HepG2 (cell line): ENCODE measurements at regions of chr6 and their contacts with region 1.

Region 1: DNA sequence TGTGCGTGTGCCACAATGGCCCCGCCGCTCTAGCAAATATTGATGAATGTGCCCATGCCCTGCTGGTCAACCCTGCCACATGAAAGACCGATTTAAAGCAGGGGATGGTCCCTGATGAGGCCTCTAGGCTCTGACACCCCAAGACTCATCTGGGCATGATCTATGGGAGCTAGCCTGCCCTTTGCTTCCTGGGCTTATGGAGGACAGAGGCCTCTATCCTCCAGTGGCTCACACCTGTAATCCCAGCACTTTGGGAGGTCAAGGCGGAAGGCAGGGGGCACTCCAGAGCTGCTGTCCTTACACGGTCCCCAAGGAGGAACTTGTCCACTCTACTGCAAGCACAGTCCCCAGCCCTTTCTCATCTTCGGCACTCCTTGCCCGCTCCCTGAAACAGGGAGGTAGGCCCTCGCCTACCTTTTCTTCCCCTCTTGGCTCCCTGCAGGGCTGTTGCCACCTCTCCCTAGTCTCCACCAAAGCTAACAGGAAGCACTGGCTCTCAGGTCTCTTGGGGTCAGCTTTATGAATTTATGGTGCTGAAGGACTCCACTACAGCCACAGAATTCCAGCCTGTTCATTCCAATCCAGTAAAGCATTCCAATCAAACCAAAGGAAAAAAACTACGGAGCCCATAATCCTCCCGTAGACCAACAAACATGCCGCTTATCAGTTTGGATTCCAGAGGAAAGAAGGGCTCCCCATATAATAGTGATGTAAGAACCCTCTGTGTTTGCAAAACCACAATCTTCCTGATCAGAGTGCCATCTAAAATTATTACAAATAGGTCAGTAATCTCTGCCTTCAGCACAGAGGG is 48.7 kb upstream of the FOXQ1 start:
- DNase-seq: peak; percentile 99
- ATAC-seq: peak; percentile 57
- H3K4me3 ChIP-seq: peak overlapping the region; percentile 14 to 53 (median 14); a peak in 5 of 6 replicates
- H3K27ac ChIP-seq: peak overlapping the region; percentile 95
- H3K4me1 ChIP-seq: peaks cover 67% of the 10 kb centered on the region
- H3K27me3 ChIP-seq: no peaks in the 10 kb centered on the region
- CTCF ChIP-seq: peak; percentile 86
- EP300 ChIP-seq: peak in 1 of 2 experiments; percentile 91; a peak in 3 of 4 replicates
- POLR2A ChIP-seq: peak in 1 of 2 experiments; percentile 43; a peak in 2 of 4 replicates
- RAD21 ChIP-seq: peak; percentile 87

Region 2: DNA sequence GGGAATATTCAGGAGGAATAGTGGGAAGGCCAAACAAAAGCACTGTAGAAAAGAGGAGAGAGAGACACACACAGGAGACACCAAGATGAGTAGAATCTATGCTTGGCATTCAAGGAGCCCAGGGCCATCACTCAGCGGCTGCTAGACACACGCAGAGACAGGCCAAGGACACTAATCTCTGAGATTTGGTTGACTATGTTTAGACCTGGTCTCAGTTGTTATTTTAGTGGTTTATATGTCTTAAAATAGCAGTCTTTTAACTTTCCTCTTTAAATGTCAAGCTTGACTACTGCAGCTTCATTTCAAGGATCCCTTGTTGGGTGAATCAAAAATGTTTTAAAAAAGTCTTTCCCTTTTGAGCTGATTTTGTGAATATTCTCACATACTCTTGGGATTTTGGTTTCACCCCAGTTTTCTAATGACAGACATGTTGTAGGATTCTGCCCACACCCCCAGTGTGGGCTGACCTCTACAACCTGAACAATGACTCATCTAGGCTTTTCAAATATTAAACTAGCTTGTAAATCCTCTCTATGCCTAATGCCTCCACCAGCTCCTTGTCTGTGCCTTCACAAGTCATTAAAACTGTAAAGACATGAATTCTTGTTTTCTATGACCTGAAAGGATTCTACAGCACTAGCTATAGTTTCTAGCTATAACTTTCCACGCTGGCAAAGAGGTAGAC is 427.6 kb before region 1 on chr6:
- CTCF ChIA-PET with region 1: no interaction called
- POLR2A ChIA-PET with region 1: interaction called, 14 read pairs
- in situ Hi-C with region 1: no loop called
- intact Hi-C with region 1: no loop called
- DNase-seq: no peak
- ATAC-seq: peak; percentile 48; the same call in 1 of the 3 replicates
- H3K4me3 ChIP-seq: no peak overlapping the region
- H3K27ac ChIP-seq: no peak overlapping the region
- H3K4me1 ChIP-seq: peaks cover 33% of the 10 kb centered on the region
- H3K27me3 ChIP-seq: peaks cover 1 to 4% of the 10 kb centered on the region in 2 experiments; a peak in 1 of 5 replicates
- CTCF ChIP-seq: no peak
- EP300 ChIP-seq: no peak
- POLR2A ChIP-seq: no peak
- RAD21 ChIP-seq: no peak

Region 3: GRCh38 chr6:1055015-1055921 is 208.0 kb before region 1 on chr6:
- CTCF ChIA-PET with region 1: no interaction called
- POLR2A ChIA-PET with region 1: interaction called, 102 read pairs
- in situ Hi-C with region 1: loop called (anchors 5 kb)
- intact Hi-C with region 1: loop called (anchors 1 kb)
- DNase-seq: peak; percentile 100
- ATAC-seq: peak; percentile 80
- H3K4me3 ChIP-seq: peak overlapping the region; percentile 33 to 70 (median 42)
- H3K27ac ChIP-seq: peak overlapping the region; percentile 92
- H3K4me1 ChIP-seq: peaks cover 55% of the 10 kb centered on the region
- H3K27me3 ChIP-seq: no peaks in the 10 kb centered on the region
- CTCF ChIP-seq: no peak
- EP300 ChIP-seq: peak; percentile 99 to 100
- POLR2A ChIP-seq: peak; percentile 59 to 71
- RAD21 ChIP-seq: peak; percentile 27; the same call in 1 of the 2 replicates

Region 4: GRCh38 chr6:1200718-1201105 is 62.5 kb before region 1 on chr6:
- CTCF ChIA-PET with region 1: no interaction called
- POLR2A ChIA-PET with region 1: interaction called, 10 read pairs
- in situ Hi-C with region 1: no loop called
- intact Hi-C with region 1: no loop called
- DNase-seq: peak; percentile 32
- ATAC-seq: no peak
- H3K4me3 ChIP-seq: no peak overlapping the region
- H3K27ac ChIP-seq: no peak overlapping the region
- H3K4me1 ChIP-seq: peaks cover 67% of the 10 kb centered on the region
- H3K27me3 ChIP-seq: no peaks in the 10 kb centered on the region
- CTCF ChIP-seq: no peak
- EP300 ChIP-seq: no peak
- POLR2A ChIP-seq: no peak
- RAD21 ChIP-seq: no peak

Region 5: DNA sequence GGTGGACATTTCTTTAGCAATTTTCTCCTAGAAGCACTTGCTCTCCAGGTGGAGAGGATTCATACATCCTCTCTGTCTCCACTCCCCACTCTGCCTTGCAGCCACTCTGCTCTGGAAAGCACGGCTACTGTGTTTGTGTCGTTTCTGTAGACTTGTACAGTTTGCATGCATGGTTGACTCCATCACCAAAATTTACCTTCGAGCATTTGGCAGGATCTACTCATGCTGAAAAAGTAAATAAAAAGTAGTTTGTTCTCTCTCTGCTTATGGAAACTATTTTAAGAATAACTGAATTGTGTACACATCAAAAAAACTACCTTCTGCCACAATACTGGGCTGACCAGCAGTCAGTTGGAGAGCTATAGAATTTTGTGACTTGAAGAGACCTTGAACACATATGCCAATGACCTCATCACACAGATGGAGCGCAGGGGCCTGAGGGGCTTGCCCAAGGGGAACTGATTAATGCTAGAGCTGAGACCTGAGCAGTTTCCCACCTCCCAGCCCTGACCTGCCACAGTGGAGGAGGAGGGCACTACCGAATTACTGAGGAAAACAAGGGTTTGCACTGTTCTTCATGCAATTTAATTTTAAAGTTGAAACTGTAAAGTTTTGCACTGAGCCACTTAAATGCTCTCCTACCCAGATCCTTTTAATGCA is 14.9 kb after region 1 on chr6:
- CTCF ChIA-PET with region 1: no interaction called
- POLR2A ChIA-PET with region 1: interaction called, 57 read pairs
- in situ Hi-C with region 1: no loop called
- intact Hi-C with region 1: no loop called
- DNase-seq: peak; percentile 38
- ATAC-seq: no peak
- H3K4me3 ChIP-seq: no peak overlapping the region
- H3K27ac ChIP-seq: no peak overlapping the region
- H3K4me1 ChIP-seq: peaks cover 34% of the 10 kb centered on the region
- H3K27me3 ChIP-seq: no peaks in the 10 kb centered on the region
- CTCF ChIP-seq: no peak
- EP300 ChIP-seq: no peak
- POLR2A ChIP-seq: no peak
- RAD21 ChIP-seq: no peak

Region 6: GRCh38 chr6:1325461-1326309 is 62.4 kb after region 1 on chr6:
- CTCF ChIA-PET with region 1: no interaction called
- POLR2A ChIA-PET with region 1: interaction called, 76 read pairs
- in situ Hi-C with region 1: no loop called
- intact Hi-C with region 1: no loop called
- DNase-seq: peak; percentile 99
- ATAC-seq: peak; percentile 85
- H3K4me3 ChIP-seq: peak overlapping the region; percentile 6 to 34 (median 14); a peak in 2 of 6 replicates
- H3K27ac ChIP-seq: peak overlapping the region; percentile 70
- H3K4me1 ChIP-seq: peaks cover 77% of the 10 kb centered on the region
- H3K27me3 ChIP-seq: no peaks in the 10 kb centered on the region
- CTCF ChIP-seq: no peak
- EP300 ChIP-seq: peak; percentile 81 to 94; a peak in 3 of 4 replicates
- POLR2A ChIP-seq: peak in 1 of 2 experiments; percentile 51; a peak in 1 of 4 replicates
- RAD21 ChIP-seq: no peak